Esophagus squamous epithelium (tissue), 5 donors: ENCODE measurements at regions of chr4 and their contacts with region 1.

Region 1: GRCh38 chr4:168917138-168917779 is 92.8 kb downstream of the CBR4 start:
- DNase-seq: no peak
- H3K4me3 ChIP-seq: no peak overlapping the region
- H3K27ac ChIP-seq: peak overlapping the region in 3 of 4 donors; percentile 30 to 40 (median 40)
- H3K4me1 ChIP-seq: no peaks in the 10 kb centered on the region
- H3K27me3 ChIP-seq: no peaks in the 10 kb centered on the region
- CTCF ChIP-seq: peak in 5 of 6 experiments; percentile 39 to 78 (median 66)
- POLR2A ChIP-seq: no peak

Region 2: GRCh38 chr4:168514249-168514852 is 402.9 kb before region 1 on chr4:
- intact Hi-C with region 1: loop called (anchors 10 kb)
- DNase-seq: no peak
- H3K4me3 ChIP-seq: no peak overlapping the region
- H3K27ac ChIP-seq: no peak overlapping the region
- H3K4me1 ChIP-seq: peaks cover 0 to 9% (median 0%) of the 10 kb centered on the region in 3 donors
- H3K27me3 ChIP-seq: no peaks in the 10 kb centered on the region
- CTCF ChIP-seq: peak in 5 of 6 experiments; percentile 21 to 52 (median 49)
- POLR2A ChIP-seq: no peak

Region 3: GRCh38 chr4:168585168-168586091 is 331.8 kb before region 1 on chr4:
- intact Hi-C with region 1: loop called (anchors 5 kb)
- DNase-seq: no peak
- H3K4me3 ChIP-seq: no peak overlapping the region
- H3K27ac ChIP-seq: no peak overlapping the region
- H3K4me1 ChIP-seq: peaks cover 13 to 47% (median 29%) of the 10 kb centered on the region in 3 donors
- H3K27me3 ChIP-seq: peaks cover 0 to 9% (median 0%) of the 10 kb centered on the region in 4 donors
- CTCF ChIP-seq: peak; percentile 22 to 81 (median 66)
- POLR2A ChIP-seq: no peak

Region 4: DNA sequence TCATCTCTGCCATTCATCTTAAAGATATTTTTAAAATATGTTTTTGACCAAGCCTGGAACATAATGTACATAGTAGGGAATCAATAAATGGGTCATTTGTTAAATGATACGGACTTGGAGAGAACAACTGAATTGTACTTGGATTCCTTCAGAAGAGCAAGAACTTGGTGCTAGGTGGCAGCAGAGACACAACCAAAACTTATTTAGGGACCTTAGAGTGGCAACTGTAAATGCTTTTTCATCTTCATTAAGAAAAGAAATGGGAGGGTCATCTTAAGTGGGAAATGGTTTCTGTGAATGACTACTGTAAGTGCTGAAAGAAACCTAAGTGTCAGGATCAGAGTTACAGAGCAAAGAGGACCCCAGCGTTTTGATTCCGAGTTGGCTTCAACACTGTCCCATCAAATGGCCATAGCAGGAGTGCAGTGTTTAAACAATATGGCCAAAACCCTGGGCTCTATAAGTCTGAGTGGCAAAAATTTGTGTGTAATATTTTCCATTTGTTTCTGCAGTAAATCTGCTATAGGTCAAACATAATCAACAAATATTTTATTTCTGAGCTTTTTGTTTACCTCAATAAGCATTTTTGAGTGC is 206.8 kb before region 1 on chr4:
- intact Hi-C with region 1: loop called (anchors 5 kb)
- DNase-seq: no peak
- H3K4me3 ChIP-seq: no peak overlapping the region
- H3K27ac ChIP-seq: peak overlapping the region in 3 of 4 donors; percentile 9 to 71 (median 71)
- H3K4me1 ChIP-seq: peaks cover 0 to 23% (median 14%) of the 10 kb centered on the region in 3 donors
- H3K27me3 ChIP-seq: no peaks in the 10 kb centered on the region
- CTCF ChIP-seq: peak; percentile 19 to 58 (median 54)
- POLR2A ChIP-seq: no peak